ENCODE measurements at regions of chr2 and their contacts with region 1.

Region 1: DNA sequence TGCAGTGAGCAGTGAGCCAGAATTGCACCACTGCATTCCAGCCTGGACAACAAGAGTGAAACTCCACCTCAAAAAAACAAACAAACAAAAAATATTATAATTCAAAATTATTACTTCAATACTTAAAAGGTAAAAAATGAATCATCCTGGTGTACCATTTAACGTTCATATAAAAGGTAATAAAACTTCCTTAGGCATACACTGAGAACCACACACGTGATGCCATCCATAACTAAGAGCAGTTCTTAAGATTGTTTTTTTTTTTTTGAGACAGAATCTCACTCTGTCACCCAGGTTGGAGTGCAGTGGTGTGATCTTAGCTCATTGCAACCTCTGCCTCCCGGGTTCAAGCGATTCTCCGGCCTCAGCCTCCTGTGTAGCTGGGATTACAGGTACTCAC is 29.4 kb downstream of the YWHAQ start:
- DNase-seq: no peak
- ATAC-seq: no peak
- H3K4me3 ChIP-seq: no peak overlapping the region
- H3K4me3 Mint-ChIP-seq: no peak overlapping the region
- H3K27ac ChIP-seq: no peak overlapping the region
- H3K27ac Mint-ChIP-seq: no peak overlapping the region
- H3K4me1 ChIP-seq: peaks cover 0 to 4% of the 10 kb centered on the region in 2 experiments
- H3K4me1 Mint-ChIP-seq: peaks cover 25 to 47% (median 38%) of the 10 kb centered on the region in 3 donors
- H3K27me3 ChIP-seq: no peaks in the 10 kb centered on the region
- H3K27me3 Mint-ChIP-seq: no peaks in the 10 kb centered on the region

Region 2: DNA sequence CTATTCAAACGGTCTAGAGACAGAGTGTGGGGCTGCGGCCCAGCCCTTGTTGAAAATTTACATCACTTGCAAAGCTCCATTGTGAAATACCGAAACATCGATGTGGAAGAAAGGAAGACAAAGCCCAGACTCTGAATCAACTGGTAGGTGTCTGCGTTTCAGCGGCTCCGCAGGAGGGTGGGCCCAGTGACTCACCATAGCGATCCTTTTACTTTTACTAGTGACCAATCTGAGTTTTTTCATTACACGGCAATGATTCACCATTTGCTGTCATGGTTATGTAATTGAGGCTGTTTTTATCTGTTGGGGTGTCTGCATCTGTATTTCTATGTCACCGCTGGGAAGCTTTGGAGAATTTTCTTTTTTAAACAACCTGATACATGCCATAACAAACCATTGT is 913.3 kb after region 1 on chr2:
- CTCF ChIA-PET with region 1: no interaction called
- POLR2A ChIA-PET with region 1: no interaction called
- DNase-seq: peak in 1 of 35 experiments; percentile 2
- ATAC-seq: no peak
- H3K4me3 ChIP-seq: no peak overlapping the region
- H3K4me3 Mint-ChIP-seq: no peak overlapping the region
- H3K27ac ChIP-seq: no peak overlapping the region
- H3K27ac Mint-ChIP-seq: no peak overlapping the region
- H3K4me1 ChIP-seq: peaks cover 0 to 3% of the 10 kb centered on the region in 2 experiments
- H3K4me1 Mint-ChIP-seq: no peaks in the 10 kb centered on the region
- H3K27me3 ChIP-seq: no peaks in the 10 kb centered on the region
- H3K27me3 Mint-ChIP-seq: no peaks in the 10 kb centered on the region

Region 3: DNA sequence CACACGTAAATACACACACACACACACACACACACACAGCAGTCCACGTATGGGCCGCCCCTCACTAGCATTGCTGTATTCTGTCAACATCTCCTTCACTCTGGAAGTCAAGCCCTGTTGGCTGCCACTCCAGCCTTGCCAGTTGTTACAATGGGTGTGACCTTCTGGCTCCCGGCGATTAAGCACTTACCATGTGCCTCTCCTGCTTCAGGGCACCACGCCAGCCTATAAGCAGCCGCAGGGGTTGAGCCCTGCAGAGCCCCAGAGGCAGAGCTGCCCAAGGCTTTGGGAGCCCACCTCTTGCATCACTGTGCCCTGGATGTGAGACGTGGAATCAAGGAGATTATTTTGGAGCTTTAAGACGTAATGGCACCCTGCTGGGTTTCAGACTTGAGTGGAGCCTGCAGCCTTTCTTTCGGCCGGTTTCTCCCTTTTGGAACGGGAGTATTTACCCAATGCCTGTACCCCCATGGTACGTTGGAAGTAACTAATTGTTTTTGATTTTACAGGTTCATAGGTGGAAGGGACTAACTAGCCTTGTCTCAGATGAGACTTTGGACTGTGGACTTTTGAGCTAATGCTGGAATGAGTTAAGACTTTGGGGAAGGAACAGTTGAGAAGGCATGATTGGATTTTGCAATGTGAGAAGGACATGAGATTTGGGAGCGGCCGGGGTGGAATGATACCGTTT is 1797.5 kb after region 1 on chr2:
- CTCF ChIA-PET with region 1: no interaction called
- POLR2A ChIA-PET with region 1: interaction called in 1 of 2 experiments, 14 read pairs
- DNase-seq: no peak
- ATAC-seq: no peak
- H3K4me3 ChIP-seq: no peak overlapping the region
- H3K4me3 Mint-ChIP-seq: no peak overlapping the region
- H3K27ac ChIP-seq: no peak overlapping the region
- H3K27ac Mint-ChIP-seq: no peak overlapping the region
- H3K4me1 ChIP-seq: no peaks in the 10 kb centered on the region
- H3K4me1 Mint-ChIP-seq: no peaks in the 10 kb centered on the region
- H3K27me3 ChIP-seq: peaks cover 0 to 9% of the 10 kb centered on the region in 2 experiments
- H3K27me3 Mint-ChIP-seq: no peaks in the 10 kb centered on the region

Measured in T-cell (primary cell).